CD14-positive monocyte (primary cell): ENCODE measurements at regions of chr7 and their contacts with region 1.

Region 1: GRCh38 chr7:28615091-28615490 is 202.8 kb downstream of the CREB5 start:
- DNase-seq: peak; percentile 24 to 32 (median 25)
- H3K4me3 ChIP-seq: no peak overlapping the region
- H3K4me3 Mint-ChIP-seq: no peak overlapping the region
- H3K27ac ChIP-seq: no peak overlapping the region
- H3K27ac Mint-ChIP-seq: peak overlapping the region in 1 of 7 donors; percentile 36
- H3K4me1 ChIP-seq: no peaks in the 10 kb centered on the region
- H3K4me1 Mint-ChIP-seq: no peaks in the 10 kb centered on the region
- H3K27me3 ChIP-seq: no peaks in the 10 kb centered on the region
- H3K27me3 Mint-ChIP-seq: peaks cover 0 to 8% (median 3%) of the 10 kb centered on the region in 3 donors
- CTCF ChIP-seq: peak; percentile 34

Region 2: DNA sequence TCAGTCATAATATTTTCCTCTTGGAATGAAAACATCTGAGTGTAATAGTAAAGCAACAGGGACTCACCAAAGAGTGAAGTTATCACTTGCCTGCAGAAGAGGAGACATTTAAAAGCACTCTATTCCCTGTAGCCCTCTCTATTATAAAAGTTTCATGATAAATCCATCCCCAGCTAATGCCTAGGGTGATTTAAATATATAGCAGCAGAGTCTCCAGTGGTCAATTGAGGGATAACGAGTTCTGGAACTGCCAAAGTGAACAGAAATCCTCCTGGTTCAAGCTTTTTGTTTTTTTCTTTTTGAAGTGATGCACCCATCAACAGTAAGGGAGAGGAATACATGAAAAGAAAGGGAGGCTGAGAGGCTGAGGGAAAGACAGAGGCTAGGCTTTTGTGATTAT is 1285.2 kb before region 1 on chr7:
- intact Hi-C with region 1: no loop called
- DNase-seq: no peak
- H3K4me3 ChIP-seq: no peak overlapping the region
- H3K4me3 Mint-ChIP-seq: no peak overlapping the region
- H3K27ac ChIP-seq: no peak overlapping the region
- H3K27ac Mint-ChIP-seq: no peak overlapping the region
- H3K4me1 ChIP-seq: no peaks in the 10 kb centered on the region
- H3K4me1 Mint-ChIP-seq: peaks cover 5% of the 10 kb centered on the region
- H3K27me3 ChIP-seq: no peaks in the 10 kb centered on the region
- H3K27me3 Mint-ChIP-seq: peaks cover 1 to 6% (median 5%) of the 10 kb centered on the region in 3 donors
- CTCF ChIP-seq: no peak

Region 3: GRCh38 chr7:28686418-28686800 is 71.3 kb after region 1 on chr7:
- intact Hi-C with region 1: no loop called
- DNase-seq: peak; percentile 23 to 68 (median 52)
- H3K4me3 ChIP-seq: peak overlapping the region; percentile 76 to 100 (median 93)
- H3K4me3 Mint-ChIP-seq: no peak overlapping the region
- H3K27ac ChIP-seq: peak overlapping the region; percentile 92 to 95
- H3K27ac Mint-ChIP-seq: no peak overlapping the region
- H3K4me1 ChIP-seq: peaks cover 65 to 90% of the 10 kb centered on the region in 2 donors
- H3K4me1 Mint-ChIP-seq: peaks cover 13% of the 10 kb centered on the region
- H3K27me3 ChIP-seq: no peaks in the 10 kb centered on the region
- H3K27me3 Mint-ChIP-seq: no peaks in the 10 kb centered on the region
- CTCF ChIP-seq: no peak

Region 4: DNA sequence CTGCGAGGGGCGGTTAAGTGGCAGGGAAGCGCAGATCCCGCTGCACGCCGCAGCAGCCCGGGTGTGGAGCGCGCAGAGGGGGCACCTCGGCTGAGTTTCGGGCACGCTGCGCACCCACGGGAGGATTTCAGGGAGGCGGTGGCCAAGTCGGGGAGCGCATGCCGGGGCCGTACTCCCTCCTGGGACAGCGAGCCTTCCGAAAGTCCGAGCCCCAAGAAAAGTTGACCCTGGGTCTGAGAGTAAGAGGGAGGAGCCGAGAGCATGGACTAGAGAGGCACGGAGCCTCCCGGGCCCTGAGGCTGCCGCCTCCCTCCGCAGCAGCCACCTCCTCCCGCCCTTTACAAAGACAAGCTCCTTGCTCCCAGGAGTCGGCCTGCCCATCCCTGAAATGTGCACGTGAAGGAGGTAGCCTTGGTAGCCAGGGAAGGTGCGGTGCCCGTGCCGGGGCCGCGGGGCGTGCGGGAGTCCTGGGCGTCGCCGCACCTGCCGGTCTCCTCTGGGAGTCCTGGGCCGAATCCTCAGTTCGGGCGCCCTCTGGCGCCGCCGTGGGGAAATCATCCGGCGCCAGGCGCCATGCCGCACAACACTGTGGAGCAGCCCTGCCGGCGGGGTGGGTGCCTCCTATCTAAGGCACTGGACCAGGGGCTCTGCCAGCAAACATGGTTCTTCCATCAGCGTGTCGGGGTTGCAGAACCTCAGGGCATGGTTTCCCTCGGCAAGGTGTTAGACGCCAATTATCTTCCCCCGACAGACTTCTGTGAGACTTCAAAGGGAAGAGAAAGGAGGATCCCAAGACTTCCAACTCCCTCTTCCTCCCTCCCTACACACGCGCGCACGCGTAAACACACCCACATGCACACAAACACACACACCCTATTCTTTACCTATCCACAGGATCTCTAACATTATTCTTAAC is 239.0 kb after region 1 on chr7:
- intact Hi-C with region 1: loop called in 1 of 2 experiments (anchors 10 kb)
- DNase-seq: peak; percentile 51 to 66 (median 58)
- H3K4me3 ChIP-seq: peak overlapping the region; percentile 20 to 81 (median 55)
- H3K4me3 Mint-ChIP-seq: peak overlapping the region; percentile 84 to 92
- H3K27ac ChIP-seq: no peak overlapping the region
- H3K27ac Mint-ChIP-seq: no peak overlapping the region
- H3K4me1 ChIP-seq: peaks cover 10 to 16% of the 10 kb centered on the region in 2 donors
- H3K4me1 Mint-ChIP-seq: peaks cover 15% of the 10 kb centered on the region
- H3K27me3 ChIP-seq: peaks cover 40 to 57% of the 10 kb centered on the region in 2 donors
- H3K27me3 Mint-ChIP-seq: peaks cover 57 to 79% (median 60%) of the 10 kb centered on the region in 3 donors
- CTCF ChIP-seq: peak; percentile 96